AG04449 (cell line): ENCODE measurements at regions of chr9 and their contacts with region 1.

Region 1: GRCh38 chr9:92716557-92716956 is 46.6 kb upstream of the IPPK start:
- DNase-seq: no peak
- H3K4me3 ChIP-seq: no peak overlapping the region
- CTCF ChIP-seq: peak; percentile 89

Region 2: GRCh38 chr9:92108122-92108521 is 608.4 kb before region 1 on chr9:
- CTCF ChIA-PET with region 1: no interaction called
- POLR2A ChIA-PET with region 1: no interaction called
- DNase-seq: no peak
- H3K4me3 ChIP-seq: no peak overlapping the region
- CTCF ChIP-seq: no peak

Region 3: GRCh38 chr9:92706216-92706940 is 10.2 kb before region 1 on chr9:
- CTCF ChIA-PET with region 1: interaction called, 46 read pairs
- POLR2A ChIA-PET with region 1: no interaction called
- DNase-seq: no peak
- H3K4me3 ChIP-seq: no peak overlapping the region
- CTCF ChIP-seq: peak; percentile 17

Region 4: DNA sequence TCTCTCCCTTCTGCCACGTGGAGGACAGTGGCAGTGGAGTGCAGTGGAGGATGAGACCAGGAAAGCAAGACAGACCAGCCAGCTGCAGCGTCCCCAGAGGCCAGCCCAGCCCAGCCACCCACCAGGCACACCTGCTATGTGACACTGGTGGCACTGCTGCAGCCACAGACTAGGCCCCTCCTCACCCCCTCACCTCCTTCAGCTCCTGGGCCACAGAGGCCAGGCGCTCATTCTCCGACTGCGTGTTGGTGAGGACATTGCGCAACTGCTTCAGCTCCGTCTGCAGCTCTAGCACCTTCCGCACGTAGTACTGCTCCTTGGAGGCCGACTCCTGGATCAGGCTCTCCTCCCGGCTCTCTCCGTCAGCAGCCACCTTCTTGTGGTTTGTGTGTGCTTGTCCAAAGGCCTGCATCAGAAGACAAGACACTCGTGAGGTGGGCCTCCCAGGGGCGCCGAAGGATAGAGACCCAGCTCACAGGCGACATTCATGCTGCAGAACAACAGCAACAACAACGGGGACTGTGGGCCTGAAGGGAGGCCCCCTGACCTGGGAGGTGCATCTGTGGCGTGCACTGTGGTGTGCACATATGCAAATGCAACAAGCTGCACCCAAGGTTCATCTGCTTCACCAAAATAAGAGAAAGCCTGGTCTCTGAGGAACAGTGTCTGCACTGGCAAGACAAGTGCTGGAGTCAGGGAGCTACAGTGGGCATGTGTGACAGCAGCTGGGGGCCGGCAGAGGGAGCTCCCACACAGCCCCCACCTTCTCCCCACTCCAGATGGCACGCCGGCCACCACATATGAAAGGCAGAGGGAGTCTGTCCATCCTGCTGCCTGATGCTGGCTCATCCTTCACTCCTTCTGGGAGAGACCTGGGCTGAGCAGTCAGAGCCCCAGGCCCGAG is 12.5 kb after region 1 on chr9:
- CTCF ChIA-PET with region 1: interaction called, 107 read pairs
- POLR2A ChIA-PET with region 1: interaction called, 3 read pairs
- DNase-seq: no peak
- H3K4me3 ChIP-seq: no peak overlapping the region
- CTCF ChIP-seq: peak; percentile 77

Region 5: GRCh38 chr9:92737207-92737606 is 20.6 kb after region 1 on chr9:
- CTCF ChIA-PET with region 1: interaction called, 107 read pairs
- POLR2A ChIA-PET with region 1: no interaction called
- DNase-seq: no peak
- H3K4me3 ChIP-seq: no peak overlapping the region
- CTCF ChIP-seq: no peak

Region 6: DNA sequence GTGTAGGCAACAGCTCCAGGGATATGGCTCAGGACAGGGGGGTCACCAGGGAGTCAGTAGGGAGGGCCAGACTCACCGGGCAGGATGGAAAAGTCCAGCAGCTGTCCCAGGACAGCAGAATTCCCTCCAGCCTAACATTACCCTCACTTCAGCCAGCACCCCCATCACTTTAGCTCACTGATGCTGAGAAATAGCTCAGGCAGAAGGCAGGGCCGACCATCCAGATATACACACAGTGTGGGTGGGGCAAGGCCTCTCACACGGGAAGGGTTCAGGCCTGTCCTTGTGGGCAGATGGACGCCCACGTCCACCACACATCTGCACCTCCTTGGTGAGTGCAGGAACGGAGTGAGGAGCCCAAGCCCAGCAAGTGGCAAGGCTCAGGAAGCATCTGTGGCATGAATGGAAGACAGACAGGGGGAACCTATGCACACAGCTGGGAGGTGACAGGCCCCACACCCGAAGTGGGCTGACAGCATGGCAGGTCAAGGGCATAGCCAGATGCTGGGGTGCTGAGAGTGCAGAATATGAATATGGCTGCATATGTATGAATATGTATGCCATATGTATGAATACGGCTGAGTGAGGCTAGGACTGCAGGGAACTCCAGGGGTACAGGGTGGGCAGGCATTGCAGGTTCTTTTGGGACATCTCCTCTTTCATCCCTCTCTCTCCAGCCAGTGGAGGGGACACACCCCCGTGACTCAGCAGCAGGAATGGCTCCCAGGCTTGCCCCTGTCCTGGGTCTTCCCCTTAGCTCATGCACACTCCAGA is 31.1 kb after region 1 on chr9:
- CTCF ChIA-PET with region 1: interaction called, 11 read pairs
- POLR2A ChIA-PET with region 1: no interaction called
- DNase-seq: no peak
- H3K4me3 ChIP-seq: no peak overlapping the region
- CTCF ChIP-seq: no peak

Region 7: DNA sequence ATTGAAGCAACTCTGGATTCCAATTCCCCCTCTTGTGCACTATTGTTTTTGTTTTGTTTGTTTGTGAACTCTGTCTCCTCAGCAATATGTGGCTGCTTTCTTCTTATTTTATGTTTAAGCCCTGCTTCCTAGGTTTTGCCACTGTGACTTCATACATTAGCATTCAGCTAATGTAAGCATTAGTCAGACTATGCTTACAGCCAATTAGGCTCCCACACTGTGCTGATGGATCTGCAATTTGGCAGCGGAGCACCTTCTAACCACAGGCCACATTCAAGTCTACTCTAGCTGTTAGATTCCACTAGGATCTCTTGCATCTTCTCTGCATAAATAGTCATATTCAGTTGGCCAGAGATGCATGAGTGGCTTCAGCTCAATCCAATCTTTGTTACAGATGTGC is 57.7 kb after region 1 on chr9:
- CTCF ChIA-PET with region 1: interaction called, 16 read pairs
- POLR2A ChIA-PET with region 1: no interaction called
- DNase-seq: peak; percentile 95
- H3K4me3 ChIP-seq: no peak overlapping the region
- CTCF ChIP-seq: no peak

Region 8: GRCh38 chr9:92911511-92912475 is 195.2 kb after region 1 on chr9:
- CTCF ChIA-PET with region 1: no interaction called
- POLR2A ChIA-PET with region 1: no interaction called
- DNase-seq: no peak
- H3K4me3 ChIP-seq: no peak overlapping the region
- CTCF ChIP-seq: no peak